BJ (cell line): ENCODE measurements at regions of chr12 and their contacts with region 1.

Region 1: GRCh38 chr12:127648321-127648720 is 618.6 kb upstream of the TMEM132C start:
- DNase-seq: no peak
- H3K4me3 ChIP-seq: no peak overlapping the region
- H3K27me3 ChIP-seq: no peaks in the 10 kb centered on the region
- CTCF ChIP-seq: no peak

Region 2: GRCh38 chr12:127636882-127637281 is 11.4 kb before region 1 on chr12:
- CTCF ChIA-PET with region 1: interaction called, 15 read pairs
- POLR2A ChIA-PET with region 1: no interaction called
- DNase-seq: no peak
- H3K4me3 ChIP-seq: no peak overlapping the region
- H3K27me3 ChIP-seq: no peaks in the 10 kb centered on the region
- CTCF ChIP-seq: no peak